ENCODE measurements at regions of chr6 and their contacts with region 1.

Region 1: DNA sequence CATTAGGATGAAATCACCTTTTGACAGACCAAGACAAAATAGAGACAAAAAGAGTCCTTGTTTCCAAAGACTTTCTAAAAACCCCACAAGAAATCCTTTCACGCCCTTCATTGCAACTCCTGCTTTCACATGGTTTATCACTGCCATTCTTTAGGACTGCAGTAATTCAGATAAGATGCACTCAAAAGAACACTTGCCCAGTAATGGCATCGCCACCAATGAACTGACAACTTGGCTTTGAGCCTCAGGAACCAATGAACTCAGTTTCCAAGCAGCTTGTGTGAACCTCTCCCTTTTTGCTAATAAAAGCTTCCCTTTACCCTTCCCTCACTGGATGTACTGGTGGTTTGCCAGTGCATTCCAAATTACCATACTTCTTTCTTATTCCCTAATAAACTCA is 21.8 kb downstream of the OSTM1 start:
- DNase-seq: no peak
- ATAC-seq: no peak
- H3K4me3 Mint-ChIP-seq: no peak overlapping the region
- H3K27ac Mint-ChIP-seq: no peak overlapping the region
- H3K4me1 Mint-ChIP-seq: no peaks in the 10 kb centered on the region
- H3K27me3 Mint-ChIP-seq: no peaks in the 10 kb centered on the region

Region 2: DNA sequence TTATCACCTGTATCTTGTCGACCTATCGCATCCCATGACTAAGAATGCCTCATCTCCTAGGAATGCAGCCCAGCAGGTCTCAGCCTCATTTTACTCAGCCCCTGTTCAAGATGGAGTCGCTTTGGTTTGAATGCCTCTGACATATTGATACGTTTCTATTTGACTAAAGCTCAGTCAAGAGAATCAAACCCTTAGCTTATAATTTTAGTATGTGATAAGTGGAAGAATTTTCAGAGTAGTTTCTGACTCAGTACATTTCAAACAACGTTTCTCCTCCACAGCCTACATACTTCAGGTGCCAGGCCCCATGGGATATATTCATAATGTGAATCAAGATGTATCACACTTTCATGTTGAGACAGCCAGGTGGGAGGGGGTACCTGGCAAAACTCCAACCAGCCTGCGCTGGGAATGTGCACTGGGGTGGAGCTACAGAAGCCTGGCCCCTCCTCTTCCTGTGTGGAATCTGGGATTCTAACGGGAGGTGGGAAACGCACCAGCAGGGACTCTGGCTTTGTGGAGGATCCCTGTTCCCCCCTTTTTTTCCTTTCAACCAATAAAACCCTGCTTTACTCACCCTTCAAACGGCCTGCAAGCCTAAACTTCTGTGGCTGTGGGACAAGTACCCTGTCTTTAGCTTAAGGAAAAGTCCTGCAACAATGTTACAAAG is 87.9 kb before region 1 on chr6:
- CTCF ChIA-PET with region 1: no interaction called
- POLR2A ChIA-PET with region 1: no interaction called
- DNase-seq: no peak
- ATAC-seq: no peak
- H3K4me3 Mint-ChIP-seq: no peak overlapping the region
- H3K27ac Mint-ChIP-seq: no peak overlapping the region
- H3K4me1 Mint-ChIP-seq: no peaks in the 10 kb centered on the region
- H3K27me3 Mint-ChIP-seq: peaks cover 6% of the 10 kb centered on the region

Region 3: GRCh38 chr6:108068618-108069017 is 15.9 kb after region 1 on chr6:
- CTCF ChIA-PET with region 1: interaction called, 11 read pairs
- POLR2A ChIA-PET with region 1: no interaction called
- DNase-seq: peak; percentile 64
- ATAC-seq: peak; percentile 93
- H3K4me3 Mint-ChIP-seq: no peak overlapping the region
- H3K27ac Mint-ChIP-seq: no peak overlapping the region
- H3K4me1 Mint-ChIP-seq: peaks cover 10% of the 10 kb centered on the region
- H3K27me3 Mint-ChIP-seq: no peaks in the 10 kb centered on the region